Tibial artery (tissue), 4 donors: ENCODE measurements at regions of chr9 and their contacts with region 1.

Region 1: DNA sequence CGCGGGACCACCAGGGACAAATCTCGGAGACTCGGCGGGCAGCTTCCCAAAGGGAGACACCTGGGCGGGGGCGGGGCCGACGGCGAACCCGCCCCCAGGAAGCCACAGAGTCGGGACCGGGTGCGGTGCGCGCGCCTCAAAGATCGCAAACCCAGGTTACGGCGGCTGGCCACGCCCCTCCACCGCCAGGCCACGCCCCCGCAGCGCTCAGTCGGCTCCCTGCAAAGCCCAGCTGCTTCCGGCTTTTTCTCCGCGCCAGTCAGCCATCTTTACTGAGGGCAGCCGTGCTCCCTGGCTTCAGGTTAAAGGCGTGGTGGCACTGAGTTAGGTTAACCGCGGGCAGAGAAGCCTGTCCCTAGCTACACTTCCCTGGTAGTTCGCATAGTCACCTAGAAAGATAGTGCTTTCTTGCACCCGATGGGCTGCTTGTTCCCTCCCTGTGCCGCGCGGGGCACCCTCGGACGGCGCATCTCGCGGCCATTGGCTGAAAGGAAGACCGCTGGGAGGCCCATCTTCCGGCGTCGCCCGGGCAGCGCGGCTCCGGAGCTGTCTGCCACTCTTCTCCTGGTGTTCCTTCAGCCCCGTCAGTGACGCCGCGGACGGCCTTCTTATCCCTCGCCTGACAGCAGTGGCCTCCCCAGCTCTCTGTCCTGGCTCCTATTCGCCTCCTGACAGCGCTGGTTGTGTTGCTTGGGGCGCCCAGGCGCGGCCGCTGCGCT is at the start of gene TBC1D2:
- DNase-seq: peak; percentile 95 to 97
- H3K4me3 ChIP-seq: peak within 1 kb of the TSS; percentile 71 to 76
- H3K27ac ChIP-seq: peak within 1 kb of the TSS; percentile 94
- H3K4me1 ChIP-seq: peaks cover 0 to 20% (median 13%) of the 10 kb centered on the region in 4 donors
- H3K27me3 ChIP-seq: no peaks in the 10 kb centered on the region
- CTCF ChIP-seq: peak in 1 of 2 experiments; percentile 12

Region 2: GRCh38 chr9:97696803-97697601 is 558.7 kb before region 1 on chr9 and contains the start of gene XPA:
- intact Hi-C with region 1: loop called (anchors 5 kb)
- DNase-seq: peak; percentile 95 to 98
- H3K4me3 ChIP-seq: peak within 1 kb of the TSS; percentile 77 to 86
- H3K27ac ChIP-seq: peak within 1 kb of the TSS; percentile 95 to 96
- H3K4me1 ChIP-seq: peaks cover 0 to 30% (median 22%) of the 10 kb centered on the region in 4 donors
- H3K27me3 ChIP-seq: no peaks in the 10 kb centered on the region
- CTCF ChIP-seq: peak in 1 of 2 experiments; percentile 24

Region 3: DNA sequence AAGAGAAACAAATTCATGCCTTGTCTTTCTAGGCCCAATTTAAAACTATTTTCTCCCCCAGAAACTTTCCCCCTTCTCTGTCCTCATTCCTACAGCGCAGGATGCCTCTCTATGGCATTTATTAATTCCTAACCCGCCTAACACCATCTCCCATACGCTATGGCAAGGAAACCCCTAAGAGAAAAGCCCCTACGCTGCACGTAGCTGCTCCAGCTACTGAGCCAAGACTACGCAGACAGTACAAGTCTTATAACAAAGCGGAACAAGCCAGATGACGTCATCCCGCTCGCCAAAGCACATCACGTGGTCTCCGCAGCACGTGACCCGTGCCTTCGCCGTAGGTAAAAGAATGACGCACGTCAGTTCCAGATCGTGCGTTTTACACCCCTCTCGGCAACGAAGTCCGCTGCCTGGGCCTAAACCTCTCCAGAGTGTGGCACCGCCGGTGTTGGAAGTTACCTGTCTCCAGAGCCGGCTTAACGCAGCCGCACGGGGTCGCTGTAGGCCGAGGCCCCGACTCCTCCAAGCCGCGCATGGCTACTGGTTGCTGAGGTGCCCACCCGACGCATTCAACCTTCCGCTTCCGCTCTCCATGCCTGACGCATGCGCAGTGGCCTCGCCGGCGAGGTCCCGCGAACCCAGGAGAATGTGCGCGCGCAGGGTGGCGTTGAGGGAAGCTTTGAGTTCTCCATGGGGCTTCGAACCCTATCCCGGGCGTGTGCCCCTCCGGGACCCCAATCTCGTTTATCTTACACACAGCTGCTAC is 333.6 kb before region 1 on chr9 and contains the start of gene TRMO:
- intact Hi-C with region 1: loop called (anchors 5 kb)
- DNase-seq: peak; percentile 98
- H3K4me3 ChIP-seq: peak within 1 kb of the TSS; percentile 58 to 72
- H3K27ac ChIP-seq: peak within 1 kb of the TSS; percentile 90 to 98
- H3K4me1 ChIP-seq: peaks cover 0 to 22% (median 10%) of the 10 kb centered on the region in 4 donors
- H3K27me3 ChIP-seq: peaks cover 0 to 3% of the 10 kb centered on the region in 2 donors
- CTCF ChIP-seq: peak; percentile 57 to 61

Region 4: DNA sequence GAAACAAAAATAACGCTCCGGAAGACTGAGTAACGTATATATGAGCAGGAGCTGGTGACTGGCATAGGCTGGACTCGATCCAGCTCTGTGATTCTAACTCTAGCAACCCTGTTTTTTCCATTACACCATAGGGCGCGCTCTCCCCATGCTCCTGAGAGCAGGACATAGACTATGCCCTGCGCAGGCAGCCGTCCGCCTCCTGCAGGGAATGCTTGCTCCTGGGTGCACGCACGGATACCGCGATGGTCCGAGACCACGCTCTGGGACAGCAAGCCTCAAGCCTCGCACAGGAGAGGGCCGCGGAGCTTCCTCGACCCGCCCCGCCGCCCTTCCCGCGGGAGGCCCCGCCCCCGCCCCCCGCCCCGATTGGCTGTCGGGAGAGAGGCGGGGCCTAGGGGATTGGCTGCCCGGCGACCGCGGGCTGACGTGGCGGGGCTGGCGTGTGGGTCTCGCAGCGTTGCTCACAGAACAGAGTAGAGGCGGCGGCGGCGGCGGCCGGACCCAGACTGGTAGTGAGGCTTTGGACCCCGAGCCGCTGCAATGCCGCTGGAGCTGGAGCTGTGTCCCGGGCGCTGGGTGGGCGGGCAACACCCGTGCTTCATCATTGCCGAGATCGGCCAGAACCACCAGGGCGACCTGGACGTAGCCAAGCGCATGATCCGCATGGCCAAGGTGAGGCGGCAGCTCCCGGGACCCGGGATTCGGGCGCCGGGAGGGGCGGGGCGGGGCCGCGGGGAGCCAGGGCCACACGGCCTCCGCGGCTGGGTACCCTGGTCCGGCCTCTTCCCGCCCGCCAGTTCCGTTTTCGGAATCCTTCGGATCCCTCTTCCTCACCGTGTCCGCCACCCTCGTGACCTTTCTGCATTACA is 199.2 kb before region 1 on chr9 and contains the start of gene NANS:
- intact Hi-C with region 1: loop called (anchors 10 kb)
- DNase-seq: peak; percentile 89 to 96
- H3K4me3 ChIP-seq: peak within 1 kb of the TSS; percentile 87 to 96
- H3K27ac ChIP-seq: peak within 1 kb of the TSS; percentile 95 to 97
- H3K4me1 ChIP-seq: peaks cover 0 to 20% (median 13%) of the 10 kb centered on the region in 4 donors
- H3K27me3 ChIP-seq: no peaks in the 10 kb centered on the region
- CTCF ChIP-seq: no peak

Region 5: GRCh38 chr9:98450486-98450885 is 194.7 kb after region 1 on chr9:
- intact Hi-C with region 1: no loop called
- DNase-seq: no peak
- H3K4me3 ChIP-seq: no peak overlapping the region
- H3K27ac ChIP-seq: no peak overlapping the region
- H3K4me1 ChIP-seq: peaks cover 0 to under 1% (median 0%) of the 10 kb centered on the region in 4 donors
- H3K27me3 ChIP-seq: peaks cover 0 to 2% of the 10 kb centered on the region in 2 donors
- CTCF ChIP-seq: no peak

Region 6: DNA sequence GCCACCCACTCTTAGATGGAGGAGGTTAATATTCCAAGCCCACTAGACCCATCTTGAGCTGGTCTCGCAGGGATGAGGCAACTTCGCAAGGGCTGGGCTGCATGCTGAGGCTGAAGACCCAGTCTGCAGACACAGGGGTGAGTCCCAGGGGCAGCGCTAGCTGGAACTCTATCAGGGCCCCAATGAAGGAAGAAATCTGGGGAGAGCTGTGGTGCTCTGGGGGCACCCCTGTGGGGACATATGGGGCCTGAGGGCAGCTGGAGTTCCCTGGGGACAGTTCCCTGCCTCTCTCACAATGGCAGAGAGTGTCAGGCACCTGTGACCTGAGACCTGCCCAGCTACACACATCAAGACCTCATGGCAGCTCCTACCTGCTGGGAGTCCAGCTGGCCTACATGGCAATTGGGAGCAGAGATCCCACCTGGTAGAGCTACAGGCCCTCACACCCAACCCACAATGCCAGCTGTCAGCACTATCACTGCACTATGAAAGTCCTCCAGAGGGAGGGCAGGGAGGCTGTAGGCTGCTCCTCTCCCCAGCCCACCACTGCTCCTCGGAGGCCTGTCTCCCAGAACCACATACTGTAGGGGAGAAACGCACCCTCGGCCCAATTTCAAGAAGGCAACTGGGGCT is 250.8 kb after region 1 on chr9:
- intact Hi-C with region 1: no loop called
- DNase-seq: no peak
- H3K4me3 ChIP-seq: no peak overlapping the region
- H3K27ac ChIP-seq: no peak overlapping the region
- H3K4me1 ChIP-seq: no peaks in the 10 kb centered on the region
- H3K27me3 ChIP-seq: no peaks in the 10 kb centered on the region
- CTCF ChIP-seq: no peak